ENCODE measurements at regions of chr12 and their contacts with region 1.

Region 1: GRCh38 chr12:56448860-56449621 is at the start of gene TIMELESS:
- DNase-seq: peak; percentile 89
- ATAC-seq: peak; percentile 98
- H3K4me3 ChIP-seq: peak within 1 kb of the TSS; percentile 81
- H3K27ac ChIP-seq: peak within 1 kb of the TSS; percentile 82
- H3K4me1 ChIP-seq: peaks cover 12% of the 10 kb centered on the region
- H3K27me3 ChIP-seq: no peaks in the 10 kb centered on the region
- CTCF ChIP-seq: no peak
- total RNA-seq, gene TIMELESS: 26.5 and 29.5 TPM in 2 replicates

Region 2: GRCh38 chr12:56286044-56286830 is 162.8 kb before region 1 on chr12:
- CTCF ChIA-PET with region 1: no interaction called
- POLR2A ChIA-PET with region 1: no interaction called
- intact Hi-C with region 1: no loop called
- DNase-seq: no peak
- ATAC-seq: no peak
- H3K4me3 ChIP-seq: no peak overlapping the region
- H3K27ac ChIP-seq: no peak overlapping the region
- H3K4me1 ChIP-seq: peaks cover 9% of the 10 kb centered on the region
- H3K27me3 ChIP-seq: no peaks in the 10 kb centered on the region
- CTCF ChIP-seq: no peak

Region 3: DNA sequence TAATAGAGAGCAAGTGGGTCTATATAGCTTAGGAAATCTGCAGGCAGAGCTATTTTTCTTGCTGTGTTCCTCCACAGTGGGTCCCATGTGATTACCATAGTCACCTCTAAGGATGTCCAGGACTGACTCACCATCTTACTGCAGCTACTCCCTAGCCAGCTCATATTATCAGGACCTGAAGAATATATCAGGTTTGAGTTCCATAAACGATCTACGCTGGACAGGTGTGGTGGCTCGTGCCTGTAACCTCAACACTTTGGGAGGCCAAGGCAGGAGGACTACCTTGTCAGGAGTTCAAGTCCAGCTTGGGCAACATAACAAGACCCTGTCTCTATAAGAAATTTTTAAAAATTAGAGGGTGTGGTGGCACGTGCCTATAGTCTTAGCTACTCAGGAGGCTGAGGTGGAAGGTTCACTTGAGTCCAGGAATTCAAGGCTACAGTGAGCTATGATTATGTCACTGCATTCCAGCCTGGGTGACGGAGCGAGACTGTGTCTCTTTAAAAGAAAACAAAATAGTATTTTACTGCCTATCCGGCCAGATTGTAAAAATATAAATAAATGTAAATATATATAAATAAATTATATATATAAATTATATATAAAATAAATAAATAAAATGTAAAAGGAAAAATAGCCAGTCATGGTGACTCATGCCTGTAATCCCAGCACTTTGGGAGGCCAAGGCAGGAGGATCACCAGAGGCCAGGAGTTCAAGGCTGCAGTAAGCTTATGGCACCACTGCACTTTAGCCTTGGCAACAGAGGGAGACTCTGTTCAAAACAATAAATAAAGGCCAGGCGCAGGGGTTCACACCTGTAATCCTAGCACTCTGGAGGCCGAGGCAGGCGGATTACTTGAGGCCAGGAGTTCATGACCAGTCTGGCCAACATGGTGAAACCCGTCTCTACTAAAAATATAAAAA is 12.5 kb after region 1 on chr12:
- CTCF ChIA-PET with region 1: interaction called, 15 read pairs
- POLR2A ChIA-PET with region 1: interaction called, 18 read pairs
- intact Hi-C with region 1: no loop called
- DNase-seq: peak; percentile 65
- ATAC-seq: peak; percentile 88
- H3K4me3 ChIP-seq: no peak overlapping the region; the same call in 1 of the 2 replicates
- H3K27ac ChIP-seq: peak overlapping the region; percentile 3; the same call in 1 of the 2 replicates
- H3K4me1 ChIP-seq: peaks cover 11% of the 10 kb centered on the region
- H3K27me3 ChIP-seq: no peaks in the 10 kb centered on the region
- CTCF ChIP-seq: no peak